Activated T-helper 2 cell treated with anti-CD3 and anti-CD28 coated beads, Interferon-gamma antibody, Interleukin-2, Interleukin-4, amounts not matched to agents 10 μg/mL and 5 μg/mL and 100 μg/mL, durations not matched to agents 14 hours and 24 hours and 36 hours (primary cell): ENCODE measurements at regions of chr12 and their contacts with region 1.

Region 1: DNA sequence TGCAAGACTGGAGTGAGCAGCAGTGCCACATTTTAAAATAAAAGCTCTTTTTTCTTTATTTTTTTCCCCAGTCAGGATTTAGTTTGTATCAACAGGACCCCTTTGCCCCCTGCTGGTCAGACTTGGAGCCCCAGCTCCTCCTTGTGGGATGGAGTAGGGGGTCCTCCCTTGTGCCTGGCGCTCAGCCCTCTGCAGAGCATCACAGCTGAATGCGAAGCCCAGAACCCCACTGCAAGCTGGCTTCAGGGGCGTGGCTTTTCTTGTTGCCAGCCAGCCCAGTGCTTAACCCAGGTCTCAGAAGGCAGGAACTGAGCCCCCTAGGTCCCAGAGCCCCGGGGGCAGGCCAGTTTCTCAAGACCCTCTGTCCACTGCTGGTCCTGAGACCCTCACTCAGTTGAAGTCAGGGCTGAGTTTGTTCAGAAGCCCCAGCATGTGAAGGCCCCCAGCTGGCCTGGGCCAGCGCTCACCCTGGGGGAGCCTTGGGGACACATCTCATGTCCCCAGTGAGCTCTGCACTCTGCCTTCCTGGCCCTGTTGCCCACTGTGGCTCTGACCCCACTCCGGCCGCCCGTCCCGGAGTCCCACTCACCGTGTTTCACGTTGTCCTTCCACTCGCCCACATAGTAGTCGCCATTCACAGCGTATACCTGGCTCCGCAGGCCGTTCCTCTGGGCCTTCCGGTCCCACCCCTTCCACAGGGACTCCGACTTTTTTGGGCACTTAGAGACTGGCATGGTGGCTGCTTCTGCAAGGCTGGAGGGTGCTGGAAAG is 519 bp downstream of the MORN3 start:
- DNase-seq: peak; percentile 31
- H3K4me3 Mint-ChIP-seq: no peak overlapping the region
- H3K27ac Mint-ChIP-seq: peak overlapping the region; percentile 49
- H3K4me1 Mint-ChIP-seq: peaks cover 34% of the 10 kb centered on the region
- H3K27me3 Mint-ChIP-seq: no peaks in the 10 kb centered on the region

Region 2: GRCh38 chr12:121536054-121536898 is 132.7 kb before region 1 on chr12:
- intact Hi-C with region 1: loop called (anchors 5 kb)
- DNase-seq: no peak
- H3K4me3 Mint-ChIP-seq: peak overlapping the region; percentile 74
- H3K27ac Mint-ChIP-seq: no peak overlapping the region
- H3K4me1 Mint-ChIP-seq: peaks cover 33% of the 10 kb centered on the region
- H3K27me3 Mint-ChIP-seq: no peaks in the 10 kb centered on the region